Activated CD8-positive, alpha-beta memory T cell treated with anti-CD3 and anti-CD28 coated beads, Interleukin-2, amount 10 ng/mL, durations not matched to agents 7 days and 5 days (primary cell): ENCODE measurements at regions of chr13 and their contacts with region 1.

Region 1: DNA sequence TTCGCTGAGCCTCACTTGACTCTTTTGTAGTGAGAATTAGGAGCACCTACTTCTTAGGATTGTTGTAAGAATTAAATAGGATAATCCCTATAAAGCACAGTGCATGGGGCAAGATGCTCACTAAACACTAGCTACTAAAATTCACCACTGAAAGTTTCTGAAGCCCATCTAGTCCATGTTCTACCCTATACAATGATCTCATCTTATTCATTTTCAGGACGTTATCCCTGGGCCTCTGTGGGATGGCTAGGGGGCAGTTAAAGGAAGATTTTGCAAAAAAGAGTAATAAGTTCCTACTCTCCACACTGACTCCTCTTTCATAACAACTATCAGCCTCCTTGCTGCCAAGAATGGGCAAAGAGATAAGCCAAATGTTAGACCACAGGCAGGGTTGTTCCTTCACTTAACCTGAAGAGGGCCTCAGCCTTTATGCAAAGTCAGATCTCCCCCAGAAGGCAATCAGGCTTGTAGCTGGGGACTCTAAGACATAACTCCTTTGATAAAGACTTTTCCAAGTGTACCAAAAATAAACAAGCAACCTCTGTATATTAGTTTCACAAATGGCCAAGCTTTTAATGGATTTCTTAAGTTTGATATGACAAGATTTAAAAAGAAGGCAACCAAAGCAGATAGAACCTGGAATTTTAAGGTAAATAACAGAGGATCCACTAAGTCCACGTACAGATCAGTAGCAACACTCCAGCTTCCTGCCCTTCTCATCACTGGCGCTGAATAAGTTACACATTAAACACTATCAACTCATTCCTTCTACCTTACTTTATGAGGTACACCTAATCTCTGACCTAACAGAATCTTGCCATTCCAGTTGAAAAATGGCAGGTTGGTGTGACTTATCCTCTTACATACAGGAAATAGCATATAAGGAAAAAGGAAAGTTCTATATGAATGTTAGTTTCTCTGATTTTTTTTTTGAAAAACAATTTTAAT is 44.4 kb downstream of the ELF1 start:
- DNase-seq: peak; percentile 59
- ATAC-seq: peak; percentile 80
- H3K4me3 Mint-ChIP-seq: peak overlapping the region; percentile 25
- H3K27ac Mint-ChIP-seq: peak overlapping the region; percentile 71
- H3K4me1 Mint-ChIP-seq: peaks cover 85% of the 10 kb centered on the region
- H3K27me3 Mint-ChIP-seq: no peaks in the 10 kb centered on the region

Region 2: GRCh38 chr13:40984668-40985366 is 10.1 kb after region 1 on chr13:
- CTCF ChIA-PET with region 1: interaction called, 10 read pairs
- DNase-seq: no peak
- ATAC-seq: peak; percentile 65
- H3K4me3 Mint-ChIP-seq: peak overlapping the region; percentile 96
- H3K27ac Mint-ChIP-seq: peak overlapping the region; percentile 93
- H3K4me1 Mint-ChIP-seq: peaks cover 46% of the 10 kb centered on the region
- H3K27me3 Mint-ChIP-seq: no peaks in the 10 kb centered on the region

Region 3: GRCh38 chr13:40992678-40993518 is 18.2 kb after region 1 on chr13:
- CTCF ChIA-PET with region 1: interaction called, 13 read pairs
- DNase-seq: no peak
- ATAC-seq: peak; percentile 34
- H3K4me3 Mint-ChIP-seq: no peak overlapping the region
- H3K27ac Mint-ChIP-seq: peak overlapping the region; percentile 85
- H3K4me1 Mint-ChIP-seq: peaks cover 75% of the 10 kb centered on the region
- H3K27me3 Mint-ChIP-seq: no peaks in the 10 kb centered on the region

Region 4: GRCh38 chr13:41004875-41005693 is 30.4 kb after region 1 on chr13:
- CTCF ChIA-PET with region 1: interaction called, 10 read pairs
- DNase-seq: peak; percentile 51
- ATAC-seq: peak; percentile 78
- H3K4me3 Mint-ChIP-seq: peak overlapping the region; percentile 52
- H3K27ac Mint-ChIP-seq: peak overlapping the region; percentile 96
- H3K4me1 Mint-ChIP-seq: peaks cover 69% of the 10 kb centered on the region
- H3K27me3 Mint-ChIP-seq: no peaks in the 10 kb centered on the region

Region 5: GRCh38 chr13:41013835-41014234 is 39.1 kb after region 1 on chr13:
- CTCF ChIA-PET with region 1: interaction called, 16 read pairs
- DNase-seq: no peak
- ATAC-seq: peak; percentile 50
- H3K4me3 Mint-ChIP-seq: peak overlapping the region; percentile 90
- H3K27ac Mint-ChIP-seq: peak overlapping the region; percentile 91
- H3K4me1 Mint-ChIP-seq: peaks cover 49% of the 10 kb centered on the region
- H3K27me3 Mint-ChIP-seq: no peaks in the 10 kb centered on the region

Region 6: DNA sequence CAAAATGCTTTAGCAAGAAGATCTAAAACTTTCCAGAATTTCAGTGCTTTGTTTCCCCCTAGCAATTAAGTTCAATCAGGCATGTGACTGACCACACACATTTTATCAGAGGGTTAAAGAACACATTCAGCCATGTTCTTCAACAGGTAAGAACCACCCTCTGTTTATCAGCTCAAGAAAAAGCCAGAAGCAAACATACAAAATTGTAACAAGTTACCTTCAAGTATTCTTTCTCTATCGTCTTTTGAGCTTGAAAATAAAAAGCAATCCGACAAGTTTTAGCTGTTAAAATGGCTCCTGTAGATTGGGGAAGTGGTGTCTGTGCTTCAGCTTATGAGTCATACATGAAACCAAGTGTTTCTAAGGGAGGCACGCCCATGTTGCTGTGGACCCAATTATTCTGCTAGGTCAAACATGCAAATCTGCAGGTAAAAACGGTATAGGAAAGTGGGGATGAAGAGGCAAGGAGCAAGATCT is 44.3 kb after region 1 on chr13 and contains the start of gene ELF1:
- CTCF ChIA-PET with region 1: interaction called, 16 read pairs
- DNase-seq: peak; percentile 81
- ATAC-seq: peak; percentile 93
- H3K4me3 Mint-ChIP-seq: peak within 1 kb of the TSS; percentile 90
- H3K27ac Mint-ChIP-seq: peak within 1 kb of the TSS; percentile 97
- H3K4me1 Mint-ChIP-seq: peaks cover 47% of the 10 kb centered on the region
- H3K27me3 Mint-ChIP-seq: no peaks in the 10 kb centered on the region
- total RNA-seq, gene ELF1: 120 to 143 TPM

Region 7: DNA sequence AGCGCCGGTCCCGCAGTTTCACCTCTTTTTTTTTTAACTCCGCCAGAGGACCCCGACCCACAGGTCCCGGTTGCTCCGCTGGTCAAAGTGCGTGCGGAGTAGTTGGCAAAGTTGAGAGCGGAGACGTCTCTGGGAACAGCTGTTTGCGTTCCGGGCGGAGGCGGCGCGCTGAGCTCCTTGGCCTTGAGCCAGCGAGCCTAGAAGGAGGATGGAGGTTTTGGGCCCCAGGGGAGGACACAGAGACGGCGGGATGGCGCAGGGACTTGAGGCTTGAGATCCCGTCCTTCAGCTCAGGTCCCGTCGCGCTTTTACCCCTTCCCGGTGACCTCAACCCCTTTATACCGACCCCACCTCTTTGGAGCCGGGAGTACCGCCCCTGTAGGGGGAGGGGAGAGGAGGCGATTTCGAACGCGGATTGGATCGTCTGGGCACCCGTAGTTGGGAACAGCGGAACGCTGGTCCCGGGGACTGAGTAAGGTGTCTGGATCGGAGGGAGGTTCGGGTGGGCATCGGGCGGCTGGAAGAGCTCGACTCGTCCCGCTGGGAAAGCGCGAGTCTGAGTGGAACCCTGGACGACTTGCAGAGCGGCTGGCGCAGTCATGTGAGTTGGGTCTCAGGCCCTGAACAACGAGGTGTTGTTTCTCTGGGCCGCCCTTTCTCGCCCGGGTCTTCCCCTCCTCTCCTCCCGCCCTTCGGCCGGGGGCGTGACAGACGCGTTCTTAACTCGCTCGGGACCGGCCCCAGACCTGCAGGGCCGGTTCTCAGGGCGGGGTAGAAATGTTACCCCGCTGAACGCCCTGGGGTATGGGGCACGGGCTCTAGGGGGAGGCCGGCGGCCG is 86.6 kb after region 1 on chr13 and contains the start of gene WBP4:
- CTCF ChIA-PET with region 1: interaction called, 17 read pairs
- DNase-seq: peak; percentile 94
- ATAC-seq: peak; percentile 78
- H3K4me3 Mint-ChIP-seq: peak within 1 kb of the TSS; percentile 99
- H3K27ac Mint-ChIP-seq: peak within 1 kb of the TSS; percentile 98
- H3K4me1 Mint-ChIP-seq: peaks cover 48% of the 10 kb centered on the region
- H3K27me3 Mint-ChIP-seq: peaks cover 2% of the 10 kb centered on the region
- total RNA-seq, gene WBP4: 8.4 to 13.2 TPM